Activated naive CD4-positive, alpha-beta T cell treated with anti-CD3 and anti-CD28 coated beads for 36 hours (primary cell): ENCODE measurements at regions of chr11 and their contacts with region 1.

Region 1: DNA sequence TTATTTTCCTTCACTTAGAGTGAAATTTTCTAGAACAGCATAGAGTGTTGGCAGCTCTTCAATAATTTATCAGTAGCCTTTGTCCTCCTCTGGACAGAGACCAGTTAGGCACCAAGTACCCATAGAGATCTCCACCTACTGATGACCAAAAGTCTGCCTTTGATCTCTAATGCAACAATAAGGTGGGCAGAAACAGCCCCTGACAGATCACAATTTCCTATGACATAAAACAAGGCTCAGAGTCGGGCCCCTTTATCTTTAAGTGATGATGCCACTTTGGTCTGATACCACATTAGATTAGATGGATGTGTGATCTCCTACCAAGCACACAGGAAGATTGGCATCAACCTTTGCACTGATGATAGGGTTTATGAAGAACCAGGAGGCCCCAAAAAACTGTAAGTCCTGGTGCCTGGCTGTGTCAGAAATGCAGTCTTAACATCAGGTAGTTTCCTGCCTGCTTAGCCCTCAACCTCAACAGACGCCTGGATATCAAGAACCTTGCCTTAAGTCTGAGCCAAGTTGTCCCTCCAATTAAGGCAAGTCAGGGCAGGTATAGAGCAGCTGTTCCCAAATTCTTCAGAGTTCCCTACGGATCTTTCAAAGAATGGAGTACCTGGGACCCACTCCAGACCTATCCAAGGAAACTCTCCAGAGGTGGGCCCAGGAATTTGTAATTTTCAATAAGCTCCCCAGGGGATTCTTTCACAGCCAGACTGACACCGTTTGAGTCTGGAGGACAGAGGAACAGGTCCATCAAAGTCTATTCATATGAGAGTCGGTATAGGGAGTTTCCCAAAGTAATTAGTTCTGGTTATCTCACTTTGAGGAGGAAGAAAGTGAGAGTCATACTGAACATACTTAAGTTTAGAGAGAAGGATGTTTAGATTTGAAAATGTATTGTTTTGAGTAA is 30.6 kb upstream of the TMPRSS4 start:
- DNase-seq: peak; percentile 52
- H3K4me3 Mint-ChIP-seq: no peak overlapping the region
- H3K27ac Mint-ChIP-seq: peak overlapping the region; percentile 63
- H3K4me1 Mint-ChIP-seq: peaks cover 78% of the 10 kb centered on the region
- H3K27me3 Mint-ChIP-seq: no peaks in the 10 kb centered on the region

Region 2: DNA sequence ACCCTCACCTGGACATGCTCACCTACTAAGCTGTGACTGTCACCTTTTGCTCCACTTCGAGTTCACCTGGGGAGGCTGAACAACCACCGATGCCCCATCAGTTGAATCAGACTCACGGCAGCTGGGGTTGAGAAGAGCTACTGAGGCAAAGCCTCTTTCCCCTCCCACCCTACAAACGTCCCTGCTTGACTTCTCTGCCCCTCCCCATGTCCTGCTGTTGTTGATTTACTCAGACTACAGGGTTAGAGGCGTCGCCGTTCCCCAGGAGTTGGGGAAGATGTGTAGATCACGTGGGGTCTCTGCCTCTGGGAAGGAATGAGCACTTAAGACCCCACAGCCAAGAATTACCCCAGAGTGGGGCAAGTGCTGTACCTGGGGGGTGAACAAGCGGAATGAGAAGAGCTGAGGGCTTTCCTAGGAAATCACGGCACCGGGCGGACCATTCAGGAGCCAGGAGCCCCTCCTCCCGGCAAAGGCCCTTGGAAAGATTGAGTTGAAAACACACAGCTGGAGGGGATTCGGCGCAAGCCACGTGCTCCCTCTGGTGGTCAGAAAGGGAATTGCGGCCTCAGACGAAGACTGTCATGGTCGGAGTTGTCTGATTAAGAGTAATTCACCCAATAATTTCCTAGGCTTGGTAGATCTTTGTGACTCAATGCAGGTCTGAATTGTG is 228.8 kb before region 1 on chr11:
- CTCF ChIA-PET with region 1: interaction called, 32 read pairs
- intact Hi-C with region 1: loop called (anchors 1 kb)
- DNase-seq: peak; percentile 98
- H3K4me3 Mint-ChIP-seq: peak overlapping the region; percentile 56
- H3K27ac Mint-ChIP-seq: peak overlapping the region; percentile 95
- H3K4me1 Mint-ChIP-seq: peaks cover 65% of the 10 kb centered on the region
- H3K27me3 Mint-ChIP-seq: no peaks in the 10 kb centered on the region

Region 3: DNA sequence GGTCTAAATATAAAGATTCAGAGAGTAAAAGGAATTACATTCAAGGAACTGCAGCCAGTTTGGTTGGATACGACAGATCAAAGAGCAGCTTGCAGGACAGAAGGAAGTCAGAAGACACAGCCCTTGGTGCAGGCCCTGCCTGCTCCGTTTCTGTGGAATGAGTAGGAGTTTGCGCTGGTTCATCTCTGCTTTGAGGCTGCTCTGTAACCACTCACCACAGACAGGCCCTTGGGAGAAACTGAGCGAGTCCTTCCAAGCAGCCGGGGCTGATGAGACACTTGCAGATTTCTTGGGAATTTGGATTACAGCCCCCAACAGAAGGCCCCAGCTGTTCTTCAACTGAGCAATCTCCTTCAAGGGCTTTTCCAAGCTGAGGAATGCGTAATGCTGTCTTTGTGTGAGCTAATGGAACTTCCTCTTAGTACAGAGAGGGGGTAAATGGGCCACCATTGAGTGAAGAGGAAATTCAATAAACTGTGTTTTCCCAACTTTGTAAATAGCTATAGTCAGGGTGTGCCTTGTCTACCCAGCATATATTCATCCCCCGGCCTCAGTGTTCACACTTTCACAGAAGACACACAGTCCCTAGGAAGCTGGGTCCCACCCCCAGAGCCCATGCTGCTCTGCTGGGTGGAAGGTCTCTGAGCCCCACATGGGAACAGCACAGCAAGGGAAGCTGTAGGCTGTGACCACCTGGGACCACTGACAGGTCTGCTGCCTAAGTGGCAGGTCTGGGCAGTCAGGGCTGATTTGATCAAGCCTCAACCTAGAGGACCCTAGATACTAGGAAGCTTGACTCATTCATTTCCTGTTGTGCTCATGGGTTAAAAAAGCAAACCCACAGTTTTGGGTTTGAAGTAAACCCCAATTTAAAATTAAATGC is 43.5 kb before region 1 on chr11:
- CTCF ChIA-PET with region 1: interaction called, 7 read pairs
- intact Hi-C with region 1: loop called (anchors 1 kb)
- DNase-seq: peak; percentile 73
- H3K4me3 Mint-ChIP-seq: no peak overlapping the region
- H3K27ac Mint-ChIP-seq: peak overlapping the region; percentile 80
- H3K4me1 Mint-ChIP-seq: peaks cover 68% of the 10 kb centered on the region
- H3K27me3 Mint-ChIP-seq: no peaks in the 10 kb centered on the region

Region 4: GRCh38 chr11:118028626-118029025 is 17.7 kb before region 1 on chr11:
- CTCF ChIA-PET with region 1: no interaction called
- intact Hi-C with region 1: loop called (anchors 1 kb)
- DNase-seq: no peak
- H3K4me3 Mint-ChIP-seq: no peak overlapping the region
- H3K27ac Mint-ChIP-seq: no peak overlapping the region
- H3K4me1 Mint-ChIP-seq: peaks cover 7% of the 10 kb centered on the region
- H3K27me3 Mint-ChIP-seq: no peaks in the 10 kb centered on the region

Region 5: DNA sequence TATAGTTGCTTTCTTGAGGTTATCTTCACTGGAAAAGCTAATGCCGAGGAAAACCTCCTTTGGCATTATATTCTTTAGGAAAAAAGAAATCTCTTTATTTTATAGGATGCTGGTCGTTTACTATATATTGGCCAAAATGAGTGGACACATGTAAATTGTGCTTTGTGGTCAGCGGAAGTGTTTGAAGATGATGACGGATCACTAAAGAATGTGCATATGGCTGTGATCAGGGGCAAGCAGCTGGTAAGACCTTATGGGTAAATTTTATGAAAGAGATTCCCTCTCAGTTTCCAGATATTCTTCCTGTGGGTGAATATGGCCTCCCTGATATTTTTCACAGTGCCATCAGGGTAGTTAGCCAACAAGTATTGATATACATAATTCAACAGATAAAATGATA is 451.5 kb after region 1 on chr11:
- CTCF ChIA-PET with region 1: no interaction called
- intact Hi-C with region 1: no loop called
- DNase-seq: no peak
- H3K4me3 Mint-ChIP-seq: no peak overlapping the region
- H3K27ac Mint-ChIP-seq: no peak overlapping the region
- H3K4me1 Mint-ChIP-seq: peaks cover under 1% of the 10 kb centered on the region
- H3K27me3 Mint-ChIP-seq: no peaks in the 10 kb centered on the region